GM12878 (cell line): ENCODE measurements at regions of chr10 and their contacts with region 1.

Region 1: DNA sequence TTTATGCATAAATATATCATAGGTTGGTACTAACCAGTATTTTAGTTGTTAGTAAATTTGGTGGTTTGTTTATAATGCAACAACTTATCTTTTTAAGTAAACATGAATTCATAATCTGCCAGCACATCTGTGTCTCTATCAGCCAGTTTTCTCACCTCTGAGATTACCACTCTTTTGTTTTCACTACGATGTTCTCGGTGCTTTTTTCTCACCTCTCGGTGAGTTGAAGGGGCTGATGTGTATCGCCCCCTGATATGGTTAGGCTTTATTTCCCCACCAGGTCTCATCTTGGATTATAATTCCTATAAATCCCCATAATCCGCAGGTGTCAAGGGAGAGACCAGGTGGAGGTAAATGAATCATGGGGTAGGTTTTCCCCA is 114.1 kb downstream of the CAMK1D start:
- DNase-seq: no peak
- ATAC-seq: peak; percentile 72
- H3K4me3 ChIP-seq: no peak overlapping the region
- H3K27ac ChIP-seq: peak overlapping the region; percentile 15; the same call in 1 of the 2 replicates
- H3K4me1 ChIP-seq: peaks cover 30% of the 10 kb centered on the region
- H3K27me3 ChIP-seq: no peaks in the 10 kb centered on the region
- CTCF ChIP-seq: no peak
- EP300 ChIP-seq: no peak
- POLR2A ChIP-seq: no peak
- RAD21 ChIP-seq: no peak

Region 2: GRCh38 chr10:12235796-12236195 is 227.7 kb before region 1 on chr10:
- CTCF ChIA-PET with region 1: no interaction called
- POLR2A ChIA-PET with region 1: no interaction called
- RAD21 ChIA-PET with region 1: no interaction called
- SMC1A ChIA-PET with region 1: no interaction called
- in situ Hi-C with region 1: no loop called
- intact Hi-C with region 1: no loop called
- DNase-seq: no peak
- ATAC-seq: no peak
- H3K4me3 ChIP-seq: no peak overlapping the region
- H3K27ac ChIP-seq: no peak overlapping the region
- H3K4me1 ChIP-seq: no peaks in the 10 kb centered on the region; the same call in 1 of the 2 replicates
- H3K27me3 ChIP-seq: no peaks in the 10 kb centered on the region
- CTCF ChIP-seq: no peak
- EP300 ChIP-seq: no peak
- POLR2A ChIP-seq: no peak
- RAD21 ChIP-seq: no peak

Region 3: GRCh38 chr10:12428447-12429135 is 34.9 kb before region 1 on chr10:
- CTCF ChIA-PET with region 1: no interaction called
- POLR2A ChIA-PET with region 1: no interaction called
- RAD21 ChIA-PET with region 1: no interaction called
- SMC1A ChIA-PET with region 1: interaction called, 4 read pairs
- in situ Hi-C with region 1: no loop called
- intact Hi-C with region 1: loop called (anchors 1 kb)
- DNase-seq: no peak
- ATAC-seq: no peak
- H3K4me3 ChIP-seq: no peak overlapping the region
- H3K27ac ChIP-seq: no peak overlapping the region
- H3K4me1 ChIP-seq: peaks cover 16% of the 10 kb centered on the region
- H3K27me3 ChIP-seq: no peaks in the 10 kb centered on the region
- CTCF ChIP-seq: no peak
- EP300 ChIP-seq: no peak
- POLR2A ChIP-seq: no peak
- RAD21 ChIP-seq: no peak

Region 4: DNA sequence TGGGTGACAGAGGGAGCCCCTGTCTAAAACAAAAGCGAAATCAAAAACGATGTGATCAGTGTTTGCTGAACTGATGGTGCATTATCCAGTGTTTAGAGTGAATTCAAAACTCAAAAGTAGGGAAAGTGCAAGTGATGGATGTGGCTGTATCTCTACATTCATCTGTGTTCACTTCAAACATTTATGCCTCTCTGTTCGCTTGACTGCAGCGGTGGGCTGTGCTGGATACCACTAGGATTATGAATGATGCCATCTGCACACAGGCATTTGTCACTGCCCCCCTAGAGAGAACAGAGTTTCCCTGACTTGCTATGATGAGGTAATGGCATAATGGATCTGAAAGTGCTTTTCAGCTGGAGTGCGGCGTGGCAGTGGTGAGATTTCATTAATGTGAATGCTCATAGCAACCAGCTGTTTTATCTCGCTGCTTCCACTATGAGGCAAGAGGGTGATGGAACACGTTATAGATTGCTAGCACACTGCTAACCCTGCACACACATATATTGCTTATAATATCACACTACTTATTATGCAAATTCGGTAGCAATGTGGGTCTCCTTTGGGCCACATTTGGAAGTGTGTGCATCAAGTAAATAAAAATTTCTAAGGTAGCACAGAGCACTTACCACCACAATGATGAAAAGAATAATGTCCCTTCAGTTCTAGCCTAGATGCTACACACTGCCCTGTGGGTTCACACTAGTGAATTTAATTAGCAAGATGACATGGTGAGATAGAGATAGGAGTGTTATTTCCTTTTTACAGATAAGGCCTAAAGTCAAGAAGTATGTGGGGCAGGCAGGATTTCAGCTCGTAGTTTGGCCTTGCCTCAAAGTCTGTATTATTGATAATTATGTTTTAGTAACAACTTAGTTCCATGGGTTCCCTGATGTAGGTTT is 50.6 kb after region 1 on chr10:
- CTCF ChIA-PET with region 1: no interaction called
- POLR2A ChIA-PET with region 1: no interaction called
- RAD21 ChIA-PET with region 1: no interaction called
- SMC1A ChIA-PET with region 1: no interaction called
- in situ Hi-C with region 1: no loop called
- intact Hi-C with region 1: no loop called
- DNase-seq: no peak
- ATAC-seq: no peak; the same call in 2 of the 3 replicates
- H3K4me3 ChIP-seq: no peak overlapping the region
- H3K27ac ChIP-seq: no peak overlapping the region
- H3K4me1 ChIP-seq: peaks cover 3% of the 10 kb centered on the region; the same call in 1 of the 2 replicates
- H3K27me3 ChIP-seq: no peaks in the 10 kb centered on the region
- CTCF ChIP-seq: no peak
- EP300 ChIP-seq: no peak
- POLR2A ChIP-seq: no peak
- RAD21 ChIP-seq: no peak